Gastrocnemius medialis (tissue), 4 donors: ENCODE measurements at regions of chr14 and their contacts with region 1.

Region 1: GRCh38 chr14:24299255-24300195 is at the starts of genes DHRS1 and NOP9:
- DNase-seq: peak; percentile 68 to 85
- ATAC-seq: peak; percentile 90 to 95
- H3K4me3 ChIP-seq: peak within 1 kb of the TSS; percentile 82 to 97 (median 88)
- H3K27ac ChIP-seq: peak within 1 kb of the TSS; percentile 75 to 89 (median 88)
- H3K4me1 ChIP-seq: peaks cover 13 to 20% of the 10 kb centered on the region in 2 donors
- H3K27me3 ChIP-seq: no peaks in the 10 kb centered on the region
- CTCF ChIP-seq: peak in 1 of 5 experiments; percentile 3
- POLR2A ChIP-seq: peak; percentile 26 to 59
- total RNA-seq, gene DHRS1: 1.9 to 12.2 (median 8.2) TPM
- total RNA-seq, gene NOP9: 27.2 to 43.5 (median 32.2) TPM

Region 2: DNA sequence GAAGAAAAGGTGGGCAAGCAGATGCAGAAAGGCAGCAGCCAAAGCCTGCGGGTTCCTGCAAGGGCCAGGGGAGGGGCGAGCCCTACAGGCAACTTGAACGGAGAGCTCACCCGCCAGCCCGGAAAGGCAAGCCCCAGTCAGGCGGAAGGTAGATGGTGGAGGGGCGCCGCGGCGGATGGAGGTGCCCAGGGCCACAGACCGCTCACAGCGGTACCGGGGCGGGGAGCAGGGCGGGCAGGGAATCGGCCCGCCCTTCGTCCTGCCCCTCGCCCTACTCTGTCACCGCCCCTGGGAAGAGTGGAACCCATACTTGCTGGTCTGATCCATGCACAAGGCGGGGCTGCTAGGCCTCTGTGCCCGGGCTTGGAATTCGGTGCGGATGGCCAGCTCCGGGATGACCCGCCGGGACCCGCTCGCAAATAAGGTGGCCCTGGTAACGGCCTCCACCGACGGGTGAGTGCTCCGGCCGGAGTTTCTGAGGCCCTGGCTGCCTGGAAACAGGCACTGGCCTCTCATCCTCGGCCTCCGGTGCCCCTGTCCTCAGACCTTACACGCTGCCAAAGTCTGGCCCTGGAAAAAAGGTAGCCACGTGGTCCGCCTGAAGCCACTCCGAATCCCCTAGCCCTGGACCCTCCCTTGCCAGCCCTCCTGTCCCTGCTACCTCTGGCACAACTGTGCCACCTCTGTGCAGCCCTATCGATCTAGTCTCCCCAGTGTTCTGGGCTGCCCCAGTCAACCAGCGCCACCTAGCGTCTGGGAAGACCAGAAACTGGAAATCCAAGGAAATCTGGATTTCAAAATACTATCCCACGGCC is 345.9 kb before region 1 on chr14 and contains the start of gene DHRS4:
- in situ Hi-C with region 1: no loop called
- intact Hi-C with region 1: loop called (anchors 1 kb)
- DNase-seq: peak; percentile 61 to 70
- ATAC-seq: peak; percentile 77 to 81
- H3K4me3 ChIP-seq: peak within 1 kb of the TSS; percentile 77 to 90 (median 83)
- H3K27ac ChIP-seq: peak within 1 kb of the TSS; percentile 88 to 93 (median 91)
- H3K4me1 ChIP-seq: peaks cover 13 to 38% of the 10 kb centered on the region in 2 donors
- H3K27me3 ChIP-seq: no peaks in the 10 kb centered on the region
- CTCF ChIP-seq: peak; percentile 77 to 94 (median 82)
- POLR2A ChIP-seq: peak; percentile 62 to 65
- total RNA-seq, gene DHRS4: 26.0 to 56.2 (median 44.1) TPM

Region 3: DNA sequence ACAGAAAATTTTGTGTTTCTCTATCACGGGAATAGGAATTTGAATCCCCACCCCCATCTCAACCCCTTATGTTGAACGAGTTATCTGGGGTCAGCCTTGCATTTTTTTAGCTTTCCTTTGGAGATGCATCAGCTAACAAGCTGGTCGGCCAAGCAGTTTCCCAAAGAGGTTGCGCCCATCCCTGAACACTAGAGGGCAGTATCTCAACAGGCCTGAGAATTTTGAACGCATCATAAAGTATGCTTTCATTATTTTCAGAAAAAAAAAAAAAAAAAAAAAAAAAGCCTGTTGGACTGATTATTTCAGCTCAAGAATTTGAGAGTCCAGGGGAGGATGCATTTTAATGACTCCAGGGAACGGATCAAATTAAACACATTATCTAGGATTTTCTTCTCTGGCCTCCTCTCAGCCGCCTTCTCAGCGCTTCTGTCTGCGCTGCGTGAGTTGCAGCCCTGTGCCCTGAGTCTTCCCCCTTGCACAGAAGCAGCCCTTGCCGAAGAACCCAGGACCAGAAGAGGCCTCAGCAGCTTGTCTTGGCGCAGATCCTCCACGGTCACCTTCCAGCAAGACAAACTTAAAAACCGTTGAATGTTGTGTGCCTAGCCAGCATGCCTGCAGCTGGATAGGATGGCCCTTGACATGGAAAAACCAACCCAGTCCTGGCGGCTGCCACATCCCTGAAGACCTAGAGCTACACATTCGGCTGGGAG is 411.0 kb after region 1 on chr14:
- in situ Hi-C with region 1: no loop called
- intact Hi-C with region 1: no loop called
- DNase-seq: peak; percentile 18 to 19
- ATAC-seq: peak in 1 of 2 donors; percentile 61
- H3K4me3 ChIP-seq: peak overlapping the region; percentile 21 to 39 (median 28)
- H3K27ac ChIP-seq: no peak overlapping the region
- H3K4me1 ChIP-seq: no peaks in the 10 kb centered on the region
- H3K27me3 ChIP-seq: no peaks in the 10 kb centered on the region
- CTCF ChIP-seq: peak in 4 of 5 experiments; percentile 6 to 69 (median 40)
- POLR2A ChIP-seq: no peak